ENCODE measurements at regions of chr2 and their contacts with region 1.

Region 1: GRCh38 chr2:70070541-70071268 is 16.6 kb upstream of the PCBP1 start:
- DNase-seq: peak; percentile 77
- H3K4me3 ChIP-seq: no peak overlapping the region
- H3K27ac ChIP-seq: peak overlapping the region; percentile 42
- H3K27me3 ChIP-seq: no peaks in the 10 kb centered on the region
- CTCF ChIP-seq: peak; percentile 97

Region 2: DNA sequence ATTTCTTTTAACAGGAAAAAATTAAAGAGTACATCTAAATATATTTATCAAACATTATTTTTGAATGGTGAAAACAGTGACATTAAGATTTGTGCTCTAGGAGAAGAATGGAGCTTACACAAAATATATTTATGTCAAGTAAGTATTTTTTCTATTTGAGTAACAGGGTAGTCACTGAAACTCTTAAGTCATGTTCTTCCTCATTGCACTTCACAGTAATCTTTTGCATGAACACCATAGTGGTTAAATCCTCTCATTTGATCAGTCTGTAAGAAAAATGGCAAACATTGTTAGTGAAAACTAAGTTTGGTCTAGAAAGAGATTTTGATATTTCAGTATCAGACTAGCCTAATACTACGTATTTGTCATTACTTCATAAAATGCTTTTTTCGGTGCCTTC is 233.2 kb before region 1 on chr2:
- CTCF ChIA-PET with region 1: no interaction called
- POLR2A ChIA-PET with region 1: no interaction called
- DNase-seq: no peak
- H3K4me3 ChIP-seq: no peak overlapping the region
- H3K27ac ChIP-seq: no peak overlapping the region
- H3K27me3 ChIP-seq: no peaks in the 10 kb centered on the region
- CTCF ChIP-seq: no peak

Region 3: GRCh38 chr2:69933839-69934613 is 136.7 kb before region 1 on chr2:
- CTCF ChIA-PET with region 1: interaction called, 17 read pairs
- POLR2A ChIA-PET with region 1: no interaction called
- DNase-seq: peak; percentile 47
- H3K4me3 ChIP-seq: peak overlapping the region; percentile 34
- H3K27ac ChIP-seq: peak overlapping the region; percentile 88
- H3K27me3 ChIP-seq: no peaks in the 10 kb centered on the region
- CTCF ChIP-seq: no peak

Region 4: GRCh38 chr2:69968614-69969013 is 102.1 kb before region 1 on chr2:
- CTCF ChIA-PET with region 1: no interaction called
- POLR2A ChIA-PET with region 1: interaction called, 11 read pairs
- DNase-seq: no peak
- H3K4me3 ChIP-seq: no peak overlapping the region
- H3K27ac ChIP-seq: no peak overlapping the region
- H3K27me3 ChIP-seq: peaks cover 4% of the 10 kb centered on the region
- CTCF ChIP-seq: no peak

Region 5: DNA sequence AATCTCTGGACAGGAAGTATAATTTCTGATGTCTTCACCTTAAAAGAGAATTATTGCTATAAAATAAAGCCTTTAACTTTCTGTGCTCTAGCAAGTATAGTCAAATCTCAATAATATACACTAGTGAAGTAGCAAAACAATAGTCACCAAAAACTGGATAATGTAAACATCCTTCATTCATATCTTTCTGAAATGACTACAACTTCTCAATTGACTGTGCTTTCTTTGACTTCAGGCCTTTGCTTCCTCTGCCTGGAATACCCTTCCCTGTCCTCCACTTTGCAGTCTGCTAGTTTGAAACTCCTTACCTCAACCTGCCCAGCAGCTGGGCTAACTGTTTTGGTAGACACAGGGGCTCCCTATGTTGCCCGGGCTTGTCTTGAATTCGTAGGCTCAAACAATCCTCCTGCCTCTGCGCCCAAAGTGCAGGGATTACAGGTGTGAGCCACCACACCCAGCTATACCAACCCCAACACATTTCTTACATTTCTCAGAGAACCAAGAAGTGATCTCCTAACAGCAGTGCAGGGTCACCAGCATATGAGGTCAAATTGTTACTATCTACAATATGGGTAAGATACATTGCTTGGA is 10.0 kb after region 1 on chr2:
- CTCF ChIA-PET with region 1: interaction called, 18 read pairs
- POLR2A ChIA-PET with region 1: interaction called, 5 read pairs
- DNase-seq: no peak
- H3K4me3 ChIP-seq: no peak overlapping the region
- H3K27ac ChIP-seq: no peak overlapping the region
- H3K27me3 ChIP-seq: no peaks in the 10 kb centered on the region
- CTCF ChIP-seq: no peak

Region 6: DNA sequence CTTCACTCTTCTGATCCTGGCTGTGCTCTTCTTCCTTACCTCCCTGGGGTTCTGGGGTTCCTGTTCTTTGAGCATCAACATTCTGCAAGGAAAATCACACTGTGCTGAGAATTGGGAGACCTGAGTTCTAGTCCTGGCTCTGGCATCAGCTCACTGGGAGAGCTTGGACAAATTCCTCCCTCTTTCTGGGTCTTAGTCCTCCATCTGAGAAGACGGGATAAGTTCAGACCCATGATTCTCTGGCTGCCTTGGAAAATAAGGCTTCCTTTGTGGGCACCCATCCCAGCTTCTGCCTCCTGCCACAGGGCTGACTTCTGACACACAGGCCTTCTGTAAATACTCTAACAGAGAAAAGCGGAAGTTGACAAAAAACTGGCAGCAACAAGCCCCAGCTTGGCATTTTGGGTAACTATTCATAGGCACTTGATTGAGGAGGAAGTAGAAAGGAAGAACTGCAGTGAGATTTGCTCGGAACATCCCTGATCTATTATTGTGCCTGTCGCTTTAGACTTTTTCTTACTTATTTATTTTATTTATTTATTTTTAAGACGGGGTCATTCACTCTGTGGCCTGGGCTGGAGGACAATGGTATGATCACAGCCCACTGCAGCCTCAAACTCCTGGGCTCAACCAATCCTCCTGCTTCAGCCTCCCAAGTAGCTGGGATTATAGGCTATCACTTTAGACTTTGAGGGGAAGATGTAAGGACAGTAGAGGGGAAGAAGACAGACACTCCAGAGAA is 24.4 kb after region 1 on chr2:
- CTCF ChIA-PET with region 1: no interaction called
- POLR2A ChIA-PET with region 1: no interaction called
- DNase-seq: no peak
- H3K4me3 ChIP-seq: no peak overlapping the region
- H3K27ac ChIP-seq: peak overlapping the region; percentile 61
- H3K27me3 ChIP-seq: no peaks in the 10 kb centered on the region
- CTCF ChIP-seq: no peak

Measured in AG04450 (cell line).